ENCODE measurements at regions of chr12 and their contacts with region 1.

Region 1: GRCh38 chr12:45215419-45216229 is at the start of gene ANO6:
- DNase-seq: peak; percentile 92
- H3K4me3 ChIP-seq: peak within 1 kb of the TSS; percentile 55 to 82 (median 78)
- H3K27ac ChIP-seq: peak within 1 kb of the TSS; percentile 91 to 97 (median 96)
- H3K4me1 ChIP-seq: peaks cover 10 to 46% (median 14%) of the 10 kb centered on the region in 4 donors
- H3K27me3 ChIP-seq: peaks cover 3% of the 10 kb centered on the region
- CTCF ChIP-seq: peak in 1 of 5 experiments; percentile 1
- EP300 ChIP-seq: no peak
- POLR2A ChIP-seq: peak; percentile 78
- total RNA-seq, gene ANO6: 16.9 to 23.0 (median 20.4) TPM

Region 2: GRCh38 chr12:44827832-44828438 is 387.7 kb before region 1 on chr12:
- in situ Hi-C with region 1: no loop called
- intact Hi-C with region 1: no loop called
- DNase-seq: no peak
- H3K4me3 ChIP-seq: no peak overlapping the region
- H3K27ac ChIP-seq: no peak overlapping the region
- H3K4me1 ChIP-seq: no peaks in the 10 kb centered on the region
- H3K27me3 ChIP-seq: no peaks in the 10 kb centered on the region
- CTCF ChIP-seq: no peak
- EP300 ChIP-seq: no peak
- POLR2A ChIP-seq: no peak

Region 3: DNA sequence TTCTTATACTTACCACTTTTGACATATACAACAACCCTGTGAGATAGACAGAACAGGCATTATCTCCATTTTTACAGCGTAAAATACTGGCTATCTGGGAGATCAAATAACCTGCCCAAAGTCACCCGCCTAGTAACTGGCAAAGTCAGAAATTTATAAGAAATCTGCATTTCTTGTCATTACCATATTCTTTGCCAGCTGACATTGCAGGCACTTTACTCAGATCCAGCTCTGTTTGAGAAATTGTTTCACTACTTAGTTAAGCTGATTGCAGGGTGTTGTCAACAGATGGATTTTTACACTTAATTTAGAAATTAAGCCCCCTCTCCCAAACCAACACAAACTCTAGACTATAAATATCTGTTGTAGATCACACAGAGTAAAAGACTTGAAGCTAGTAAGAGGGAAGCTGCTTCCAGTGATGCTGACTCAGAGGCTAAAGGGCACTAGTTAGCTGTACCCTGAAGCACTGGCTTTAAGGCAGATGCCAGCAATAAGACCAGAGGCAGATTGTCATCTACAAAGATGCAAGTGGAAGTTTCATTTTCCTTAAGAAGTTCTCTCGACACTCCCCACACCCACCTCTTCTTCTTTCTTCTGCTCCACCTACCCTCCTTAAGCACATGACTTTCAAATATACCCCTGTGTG is 153.3 kb after region 1 on chr12:
- in situ Hi-C with region 1: no loop called
- intact Hi-C with region 1: loop called (anchors 10 kb)
- DNase-seq: no peak
- H3K4me3 ChIP-seq: no peak overlapping the region
- H3K27ac ChIP-seq: no peak overlapping the region
- H3K4me1 ChIP-seq: no peaks in the 10 kb centered on the region
- H3K27me3 ChIP-seq: no peaks in the 10 kb centered on the region
- CTCF ChIP-seq: no peak
- EP300 ChIP-seq: no peak
- POLR2A ChIP-seq: no peak

Measured in transverse colon (tissue), 4 donors.